Breast epithelium (tissue), 4 donors: ENCODE measurements at regions of chr20 and their contacts with region 1.

Region 1: GRCh38 chr20:36214684-36215256 is 21.5 kb upstream of the AAR2 start:
- DNase-seq: no peak
- H3K4me3 ChIP-seq: no peak overlapping the region
- H3K27ac ChIP-seq: no peak overlapping the region
- H3K4me1 ChIP-seq: no peaks in the 10 kb centered on the region
- H3K27me3 ChIP-seq: no peaks in the 10 kb centered on the region
- CTCF ChIP-seq: peak in 1 of 3 donors; percentile 18
- POLR2A ChIP-seq: no peak

Region 2: DNA sequence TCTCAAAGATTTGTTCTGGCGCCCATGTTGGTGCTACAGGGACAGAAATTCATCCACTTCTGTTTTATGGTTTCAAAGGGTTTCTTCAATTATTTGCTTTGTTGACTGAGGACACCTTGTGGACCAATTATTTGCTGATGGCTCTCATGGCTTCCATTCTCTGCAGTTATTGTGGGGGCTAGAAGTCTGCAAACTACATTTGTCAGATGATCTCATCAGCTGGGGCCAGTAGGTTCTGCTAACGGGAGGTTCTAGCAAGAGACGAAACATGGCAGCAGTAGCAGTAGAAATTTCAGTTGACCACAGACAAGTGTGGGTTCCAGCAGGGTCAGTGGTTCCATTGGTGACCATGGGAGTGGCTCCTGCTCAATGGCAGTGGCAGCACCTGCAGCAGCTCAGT is 1385.7 kb after region 1 on chr20:
- intact Hi-C with region 1: loop called (anchors 5 kb)
- DNase-seq: no peak
- H3K4me3 ChIP-seq: no peak overlapping the region
- H3K27ac ChIP-seq: no peak overlapping the region
- H3K4me1 ChIP-seq: no peaks in the 10 kb centered on the region
- H3K27me3 ChIP-seq: peaks cover 0 to 21% of the 10 kb centered on the region in 2 donors
- CTCF ChIP-seq: no peak
- POLR2A ChIP-seq: no peak